Activated CD8-positive, alpha-beta T cell treated with anti-CD3 and anti-CD28 coated beads, Interleukin-2, amount 10 ng/mL, durations not matched to agents 7 days and 5 days (primary cell): ENCODE measurements at regions of chr5 and their contacts with region 1.

Region 1: DNA sequence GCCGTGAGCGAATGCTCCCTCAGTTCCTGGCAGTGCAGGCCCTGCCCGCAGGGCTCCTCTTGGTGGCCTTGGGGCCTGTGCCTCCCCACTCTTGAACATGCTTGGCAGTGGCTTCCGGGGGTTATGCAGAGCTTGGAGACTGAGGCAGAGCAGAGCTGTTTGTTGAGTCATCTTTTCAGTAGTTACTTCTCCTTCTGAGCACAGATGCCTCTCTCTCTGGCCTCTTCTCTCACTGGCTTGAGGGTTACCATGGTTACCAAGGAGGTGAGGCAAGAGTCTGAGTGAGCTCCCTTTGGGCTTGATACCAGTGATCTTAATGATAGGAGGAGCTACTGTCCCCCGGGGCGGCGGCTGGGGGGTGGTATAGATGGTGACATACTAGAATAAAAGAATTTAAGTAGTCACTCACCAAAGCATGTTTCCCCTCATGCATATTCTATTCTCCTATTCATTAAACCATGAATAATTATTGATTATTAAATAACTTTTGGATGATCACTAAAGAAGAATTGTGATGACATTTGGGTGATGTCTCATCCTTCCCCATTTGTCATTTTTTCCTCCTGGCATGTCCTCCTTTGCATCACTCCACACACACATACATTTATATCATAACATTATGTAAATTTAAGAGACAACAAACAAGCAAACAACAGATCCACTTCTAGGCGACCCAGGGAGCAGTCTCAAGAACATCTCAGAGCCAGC is 111.1 kb downstream of the ARHGAP26 start:
- DNase-seq: no peak
- ATAC-seq: no peak
- H3K4me3 Mint-ChIP-seq: no peak overlapping the region
- H3K27ac Mint-ChIP-seq: no peak overlapping the region
- H3K4me1 Mint-ChIP-seq: peaks cover 6% of the 10 kb centered on the region
- H3K27me3 Mint-ChIP-seq: no peaks in the 10 kb centered on the region

Region 2: GRCh38 chr5:142769741-142770631 is 111.2 kb before region 1 on chr5 and contains the start of gene ARHGAP26:
- CTCF ChIA-PET with region 1: interaction called, 22 read pairs
- POLR2A ChIA-PET with region 1: no interaction called
- DNase-seq: peak; percentile 96
- ATAC-seq: peak; percentile 96
- H3K4me3 Mint-ChIP-seq: peak within 1 kb of the TSS; percentile 96
- H3K27ac Mint-ChIP-seq: peak within 1 kb of the TSS; percentile 82
- H3K4me1 Mint-ChIP-seq: peaks cover 35% of the 10 kb centered on the region
- H3K27me3 Mint-ChIP-seq: peaks cover 3% of the 10 kb centered on the region
- total RNA-seq, gene ARHGAP26: 25.4 to 30.3 TPM

Region 3: GRCh38 chr5:142783601-142784341 is 97.5 kb before region 1 on chr5:
- CTCF ChIA-PET with region 1: interaction called, 14 read pairs
- POLR2A ChIA-PET with region 1: no interaction called
- DNase-seq: peak; percentile 67
- ATAC-seq: peak; percentile 81
- H3K4me3 Mint-ChIP-seq: peak overlapping the region; percentile 21
- H3K27ac Mint-ChIP-seq: peak overlapping the region; percentile 56
- H3K4me1 Mint-ChIP-seq: peaks cover 64% of the 10 kb centered on the region
- H3K27me3 Mint-ChIP-seq: no peaks in the 10 kb centered on the region

Region 4: GRCh38 chr5:142845402-142845921 is 35.8 kb before region 1 on chr5:
- CTCF ChIA-PET with region 1: interaction called, 12 read pairs
- POLR2A ChIA-PET with region 1: no interaction called
- DNase-seq: peak; percentile 48
- ATAC-seq: peak; percentile 81
- H3K4me3 Mint-ChIP-seq: peak overlapping the region; percentile 42
- H3K27ac Mint-ChIP-seq: peak overlapping the region; percentile 90
- H3K4me1 Mint-ChIP-seq: peaks cover 48% of the 10 kb centered on the region
- H3K27me3 Mint-ChIP-seq: no peaks in the 10 kb centered on the region